ENCODE measurements at regions of chr2 and their contacts with region 1.

Region 1: DNA sequence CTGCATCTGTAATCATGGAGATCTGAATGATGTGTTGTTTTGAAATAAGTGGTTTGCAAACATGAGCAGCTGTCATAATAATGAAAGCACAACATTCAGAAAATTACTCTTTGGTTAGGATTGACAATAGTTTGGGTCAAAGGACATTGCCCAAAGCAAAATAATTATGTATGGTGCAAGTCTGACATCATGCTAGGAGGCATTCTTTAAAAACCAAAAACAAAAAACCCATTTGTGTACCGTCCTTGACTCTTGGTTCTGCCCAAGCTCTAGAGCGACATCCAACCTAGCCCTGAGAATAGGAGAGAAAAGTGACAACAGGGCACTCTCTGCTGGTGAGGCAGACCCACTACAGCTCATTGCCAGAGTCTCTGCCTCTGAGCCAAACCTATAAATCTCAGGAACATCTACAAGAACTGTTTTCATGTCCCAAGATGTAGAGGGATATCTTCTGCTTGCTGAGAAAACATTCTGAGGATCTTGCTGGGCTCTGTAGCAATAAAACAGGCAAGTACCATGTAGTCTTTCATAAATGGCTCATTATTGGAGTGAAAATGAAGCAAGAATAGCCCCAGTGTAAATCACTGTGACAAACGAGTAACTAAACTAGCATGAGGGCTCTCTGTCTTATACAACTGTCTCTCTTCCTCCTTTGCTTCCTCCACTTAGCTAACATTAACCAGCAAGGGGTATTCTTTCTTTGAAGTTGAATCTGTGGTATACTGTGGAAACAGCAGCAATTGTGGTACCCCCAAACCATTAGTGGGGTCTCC is 266.8 kb upstream of the CXCR4 start:
- DNase-seq: no peak
- H3K4me3 ChIP-seq: no peak overlapping the region
- H3K27ac ChIP-seq: no peak overlapping the region
- H3K4me1 ChIP-seq: no peaks in the 10 kb centered on the region
- H3K27me3 ChIP-seq: no peaks in the 10 kb centered on the region
- CTCF ChIP-seq: peak in 2 of 3 donors; percentile 57 to 58
- POLR2A ChIP-seq: no peak

Region 2: GRCh38 chr2:136025057-136025973 is 359.4 kb before region 1 on chr2:
- intact Hi-C with region 1: loop called (anchors 5 kb)
- DNase-seq: peak in 1 of 2 donors; percentile 62
- H3K4me3 ChIP-seq: peak overlapping the region in 2 of 3 donors; percentile 5 to 47
- H3K27ac ChIP-seq: no peak overlapping the region
- H3K4me1 ChIP-seq: no peaks in the 10 kb centered on the region
- H3K27me3 ChIP-seq: no peaks in the 10 kb centered on the region
- CTCF ChIP-seq: no peak
- POLR2A ChIP-seq: no peak